ENCODE measurements at regions of chr1 and their contacts with region 1.

Region 1: GRCh38 chr1:99170516-99170915 is 93.8 kb upstream of the PLPPR4 start:
- DNase-seq: no peak
- H3K4me3 ChIP-seq: no peak overlapping the region
- H3K27ac ChIP-seq: no peak overlapping the region
- H3K4me1 ChIP-seq: no peaks in the 10 kb centered on the region
- H3K27me3 ChIP-seq: no peaks in the 10 kb centered on the region
- CTCF ChIP-seq: no peak

Region 2: GRCh38 chr1:98794196-98794886 is 376.2 kb before region 1 on chr1:
- CTCF ChIA-PET with region 1: no interaction called
- POLR2A ChIA-PET with region 1: no interaction called
- intact Hi-C with region 1: loop called (anchors 10 kb)
- DNase-seq: peak; percentile 73
- H3K4me3 ChIP-seq: no peak overlapping the region
- H3K27ac ChIP-seq: no peak overlapping the region
- H3K4me1 ChIP-seq: no peaks in the 10 kb centered on the region
- H3K27me3 ChIP-seq: no peaks in the 10 kb centered on the region
- CTCF ChIP-seq: peak; percentile 79

Region 3: GRCh38 chr1:99441299-99442095 is 271.0 kb after region 1 on chr1:
- CTCF ChIA-PET with region 1: no interaction called
- POLR2A ChIA-PET with region 1: no interaction called
- intact Hi-C with region 1: no loop called
- DNase-seq: peak; percentile 31
- H3K4me3 ChIP-seq: no peak overlapping the region
- H3K27ac ChIP-seq: no peak overlapping the region
- H3K4me1 ChIP-seq: peaks cover 10% of the 10 kb centered on the region
- H3K27me3 ChIP-seq: no peaks in the 10 kb centered on the region
- CTCF ChIP-seq: no peak